ENCODE measurements at regions of chr17 and their contacts with region 1.

Region 1: DNA sequence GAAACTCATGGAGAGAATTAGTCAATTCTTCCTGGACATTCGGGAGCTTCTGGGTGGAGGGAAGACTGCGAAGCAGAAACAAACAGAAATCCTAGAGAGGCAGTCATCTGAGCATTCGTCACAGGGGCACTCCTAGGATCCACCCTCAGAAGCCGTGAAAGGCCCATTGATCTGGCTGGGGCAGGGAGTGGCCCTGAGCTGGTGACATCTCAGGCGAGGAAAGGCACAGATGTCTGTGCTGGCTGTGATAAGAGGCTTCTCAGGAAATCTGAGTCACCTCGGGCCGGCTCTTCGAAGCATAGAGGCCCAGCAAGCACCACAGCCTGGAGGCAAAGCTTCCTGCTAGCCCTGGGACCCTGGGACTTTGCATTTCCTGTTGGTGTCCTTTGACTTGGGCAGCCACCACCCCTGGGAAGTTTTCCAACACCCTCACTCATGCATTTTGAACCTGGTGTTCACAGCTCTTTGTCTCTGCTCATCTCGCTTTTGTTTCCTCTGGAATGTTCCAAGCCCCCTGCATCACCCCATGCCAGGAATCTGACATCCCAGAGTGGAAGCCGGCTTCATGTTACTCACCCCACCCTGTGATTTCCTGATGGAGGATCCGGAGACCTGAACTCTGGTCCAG is 23.3 kb upstream of the CDRT4 start:
- DNase-seq: no peak
- ATAC-seq: no peak
- H3K4me3 ChIP-seq: no peak overlapping the region
- H3K27ac ChIP-seq: no peak overlapping the region
- H3K4me1 ChIP-seq: no peaks in the 10 kb centered on the region
- CTCF ChIP-seq: no peak
- EP300 ChIP-seq: no peak
- POLR2A ChIP-seq: no peak
- RAD21 ChIP-seq: no peak

Region 2: DNA sequence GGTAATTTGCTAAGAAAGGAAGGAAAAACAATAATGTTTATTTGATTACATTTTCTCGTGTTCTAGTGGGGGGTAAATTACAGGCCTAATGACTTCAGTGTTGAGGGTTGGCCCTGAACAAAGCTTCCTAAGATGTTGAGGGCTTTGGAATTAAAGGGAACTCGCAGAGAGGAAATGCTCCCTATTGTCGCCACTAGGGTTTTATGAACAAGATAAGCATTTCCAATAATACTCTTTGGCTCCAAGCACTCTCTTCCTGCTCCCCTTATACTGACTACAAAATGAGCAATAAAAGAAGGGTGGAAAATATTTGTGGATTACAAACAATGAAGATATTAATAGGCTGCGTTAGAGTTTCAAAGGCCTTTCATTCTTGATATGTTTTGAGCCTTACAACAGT is 826.2 kb before region 1 on chr17:
- CTCF ChIA-PET with region 1: no interaction called
- POLR2A ChIA-PET with region 1: no interaction called
- DNase-seq: no peak
- ATAC-seq: no peak
- H3K4me3 ChIP-seq: no peak overlapping the region
- H3K27ac ChIP-seq: no peak overlapping the region
- H3K4me1 ChIP-seq: peaks cover 12% of the 10 kb centered on the region; the same call in 2 of the 3 replicates
- CTCF ChIP-seq: no peak
- EP300 ChIP-seq: no peak
- POLR2A ChIP-seq: no peak
- RAD21 ChIP-seq: no peak

Region 3: DNA sequence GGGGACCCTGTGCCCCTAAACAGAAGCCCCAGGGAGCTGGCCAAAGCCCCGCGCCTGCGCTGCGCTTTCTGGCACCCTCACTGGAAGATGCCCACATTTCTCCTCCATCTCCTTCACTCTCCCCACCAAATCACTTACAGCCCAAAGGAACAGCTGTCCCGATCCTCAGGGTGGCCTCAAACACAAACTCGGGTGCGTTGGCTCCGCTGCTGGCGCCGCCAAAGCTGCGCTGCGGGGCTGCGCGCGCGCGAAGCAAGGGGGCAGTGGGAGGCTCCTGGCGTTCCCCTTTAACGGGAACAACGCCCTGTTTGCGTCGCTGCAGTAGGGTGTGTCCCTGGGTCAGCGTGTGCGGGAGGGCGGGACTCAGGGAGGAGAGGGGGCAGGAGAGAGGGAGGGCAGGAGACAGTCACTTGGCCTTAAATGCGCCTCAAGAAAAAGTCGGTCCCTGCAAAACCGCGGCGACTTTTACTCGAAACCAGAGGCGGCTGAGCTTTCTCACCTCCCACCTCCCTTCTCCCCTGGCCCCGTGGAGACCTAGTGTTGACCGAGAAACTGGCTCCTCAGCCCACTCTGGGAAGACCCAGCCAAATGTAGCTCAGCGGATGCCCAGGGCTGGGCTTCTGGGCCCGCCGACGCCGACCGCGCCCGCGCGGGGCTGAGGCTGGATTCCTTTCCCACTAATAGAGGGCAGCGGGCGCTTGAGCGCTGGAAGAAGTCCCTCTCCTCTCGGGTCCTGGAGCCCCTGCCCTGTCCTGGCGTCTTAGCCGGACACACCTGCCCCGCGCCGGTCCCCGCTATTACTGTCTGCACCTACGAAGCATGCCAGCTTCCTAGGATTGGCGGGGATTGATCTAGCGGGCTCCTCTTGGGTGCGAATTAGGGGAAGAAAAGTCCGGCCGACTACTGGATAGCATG is 228.2 kb before region 1 on chr17:
- CTCF ChIA-PET with region 1: interaction called, 248 read pairs
- POLR2A ChIA-PET with region 1: no interaction called
- DNase-seq: peak; percentile 97 to 98
- ATAC-seq: peak; percentile 74 to 87
- H3K4me3 ChIP-seq: peak overlapping the region; percentile 70
- H3K27ac ChIP-seq: peak overlapping the region; percentile 80 to 87
- H3K4me1 ChIP-seq: peaks cover 30% of the 10 kb centered on the region
- CTCF ChIP-seq: no peak
- EP300 ChIP-seq: no peak
- POLR2A ChIP-seq: peak; percentile 73
- RAD21 ChIP-seq: peak in 1 of 2 experiments; percentile 40; a peak in 2 of 5 replicates

Region 4: GRCh38 chr17:15436473-15437302 is 54.1 kb before region 1 on chr17:
- CTCF ChIA-PET with region 1: no interaction called
- POLR2A ChIA-PET with region 1: no interaction called
- DNase-seq: peak; percentile 41 to 48
- ATAC-seq: peak in 1 of 2 experiments; percentile 61; a peak in 3 of 6 replicates
- H3K4me3 ChIP-seq: no peak overlapping the region
- H3K27ac ChIP-seq: 0 out of 6 replicates have a peak overlapping the region, but pooled peaks of 1 of the 2 experiments have one; percentile 11
- H3K4me1 ChIP-seq: no peaks in the 10 kb centered on the region
- CTCF ChIP-seq: no peak
- EP300 ChIP-seq: no peak
- POLR2A ChIP-seq: no peak
- RAD21 ChIP-seq: no peak

Region 5: DNA sequence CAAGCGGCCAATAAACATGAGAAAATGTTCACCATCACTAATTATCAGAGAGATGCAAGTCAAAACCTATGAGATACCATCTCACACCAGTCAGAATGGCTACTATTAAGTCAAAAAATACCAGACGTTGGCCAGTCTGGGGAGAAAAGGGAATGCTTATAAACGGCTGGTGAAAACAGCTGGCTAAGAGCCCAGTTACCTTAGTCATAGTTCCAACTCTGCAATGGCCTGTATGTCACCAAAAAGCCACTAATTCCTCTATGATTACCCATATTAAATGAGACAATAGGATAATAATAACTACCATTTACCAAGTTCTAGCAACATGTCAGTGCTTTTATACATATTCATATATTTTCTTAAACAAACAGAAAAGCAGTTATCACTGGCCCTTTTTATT is 19.6 kb after region 1 on chr17:
- CTCF ChIA-PET with region 1: no interaction called
- POLR2A ChIA-PET with region 1: no interaction called
- DNase-seq: peak in 1 of 2 experiments; percentile 41
- ATAC-seq: peak; percentile 53 to 74; a peak in 4 of 6 replicates
- H3K4me3 ChIP-seq: no peak overlapping the region
- H3K27ac ChIP-seq: no peak overlapping the region
- H3K4me1 ChIP-seq: peaks cover 11% of the 10 kb centered on the region
- CTCF ChIP-seq: no peak
- EP300 ChIP-seq: no peak
- POLR2A ChIP-seq: no peak
- RAD21 ChIP-seq: no peak

Measured in A549 (cell line).